Activated CD4-positive, alpha-beta T cell treated with anti-CD3 and anti-CD28 coated beads, Interleukin-2, amount 10 ng/mL, durations not matched to agents 24 days and 14 days (primary cell): ENCODE measurements at regions of chr11 and their contacts with region 1.

Region 1: DNA sequence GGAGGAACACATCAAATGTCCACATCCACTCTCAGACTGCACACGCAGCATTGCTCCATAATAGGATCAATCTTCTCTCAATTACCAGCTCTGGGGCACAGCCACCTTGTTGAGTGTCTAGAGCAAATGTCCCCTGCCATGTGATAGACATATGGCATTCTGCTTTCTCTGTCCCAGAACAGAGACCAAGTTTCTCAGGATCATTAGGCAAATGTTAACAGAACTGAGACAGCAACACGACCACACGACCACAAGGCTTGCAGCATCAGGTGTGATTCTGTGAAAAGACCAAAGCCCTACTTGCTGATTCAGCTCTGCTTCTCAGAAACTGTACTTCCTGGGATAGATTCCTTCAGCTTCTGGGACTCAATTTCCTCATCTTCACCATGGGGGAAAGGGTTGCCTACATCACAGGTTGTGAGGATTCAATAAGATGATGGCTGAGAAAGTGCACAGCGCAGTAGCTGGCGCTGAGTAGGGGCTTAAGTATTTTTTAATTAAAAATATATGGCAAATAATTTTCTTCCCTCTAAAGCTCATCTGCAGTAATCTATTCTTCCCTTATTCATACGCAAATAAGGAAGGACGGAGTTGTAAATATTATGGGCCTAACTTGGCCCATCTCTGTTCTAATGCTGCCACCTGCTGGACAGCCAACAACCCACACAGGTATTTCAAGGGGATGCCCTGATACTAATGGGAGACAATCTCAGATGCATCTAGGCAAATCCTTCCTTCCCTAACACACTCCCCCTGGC is 54.3 kb upstream of the USP47 start:
- DNase-seq: peak; percentile 89
- H3K4me3 Mint-ChIP-seq: no peak overlapping the region
- H3K27ac Mint-ChIP-seq: no peak overlapping the region
- H3K4me1 Mint-ChIP-seq: peaks cover 2% of the 10 kb centered on the region
- H3K27me3 Mint-ChIP-seq: peaks cover 12% of the 10 kb centered on the region

Region 2: GRCh38 chr11:10770626-10771254 is 1016.7 kb before region 1 on chr11:
- intact Hi-C with region 1: loop called (anchors 5 kb)
- DNase-seq: peak; percentile 73
- H3K4me3 Mint-ChIP-seq: no peak overlapping the region
- H3K27ac Mint-ChIP-seq: no peak overlapping the region
- H3K4me1 Mint-ChIP-seq: no peaks in the 10 kb centered on the region
- H3K27me3 Mint-ChIP-seq: no peaks in the 10 kb centered on the region

Region 3: GRCh38 chr11:10933455-10934292 is 853.8 kb before region 1 on chr11:
- intact Hi-C with region 1: loop called (anchors 2 kb)
- DNase-seq: peak; percentile 93
- H3K4me3 Mint-ChIP-seq: peak overlapping the region; percentile 81
- H3K27ac Mint-ChIP-seq: no peak overlapping the region
- H3K4me1 Mint-ChIP-seq: peaks cover 21% of the 10 kb centered on the region
- H3K27me3 Mint-ChIP-seq: peaks cover 54% of the 10 kb centered on the region

Region 4: DNA sequence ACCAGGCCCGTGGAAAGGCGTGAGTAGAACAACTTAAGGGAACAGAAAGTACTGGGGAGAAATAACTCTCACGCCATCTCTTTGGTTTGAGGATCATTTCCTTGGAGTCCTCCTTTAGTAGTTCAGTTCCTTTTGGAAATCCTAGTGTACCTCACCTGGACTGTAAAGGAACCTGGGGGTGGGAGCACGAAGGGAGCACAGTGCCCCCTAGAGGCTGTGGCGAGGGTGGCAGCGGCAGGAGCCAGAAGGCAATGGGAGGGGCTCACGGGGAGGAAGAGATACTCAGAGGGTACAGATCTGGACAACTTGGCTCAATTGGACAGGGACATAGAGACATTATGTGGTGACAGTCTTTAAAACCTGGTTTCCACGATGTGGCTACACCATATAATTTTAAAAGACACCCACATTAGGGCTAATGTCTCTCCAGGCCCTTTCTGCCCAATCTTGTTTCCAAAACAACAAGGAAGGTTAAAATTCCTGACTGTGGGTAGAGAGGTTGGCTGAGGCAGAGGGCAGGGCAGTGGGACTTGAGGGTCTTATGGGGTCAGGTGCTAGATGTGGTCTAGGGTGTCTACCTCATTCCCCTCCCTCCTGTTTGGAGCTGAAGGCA is 521.4 kb before region 1 on chr11:
- intact Hi-C with region 1: loop called (anchors 5 kb)
- DNase-seq: peak; percentile 89
- H3K4me3 Mint-ChIP-seq: no peak overlapping the region
- H3K27ac Mint-ChIP-seq: no peak overlapping the region
- H3K4me1 Mint-ChIP-seq: no peaks in the 10 kb centered on the region
- H3K27me3 Mint-ChIP-seq: peaks cover 4% of the 10 kb centered on the region

Region 5: DNA sequence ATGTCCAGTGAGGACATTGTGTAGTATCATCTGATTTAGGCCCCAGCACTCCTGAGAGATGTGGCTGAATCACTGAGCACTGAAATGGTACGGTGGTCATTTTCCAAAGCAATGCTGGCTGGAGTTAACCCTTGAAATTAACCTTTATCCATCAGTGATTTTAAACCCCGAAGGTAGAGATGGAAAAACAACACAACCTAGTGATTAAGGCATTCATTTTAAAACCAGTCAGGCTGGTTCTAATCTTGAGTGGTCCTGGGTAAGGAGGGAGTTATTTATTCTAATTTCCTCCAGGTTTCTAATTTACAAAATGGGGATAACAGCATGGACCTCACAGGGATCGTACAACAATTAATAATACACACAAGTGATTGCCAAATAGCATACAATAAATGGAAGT is 427.9 kb before region 1 on chr11:
- intact Hi-C with region 1: no loop called
- DNase-seq: no peak
- H3K4me3 Mint-ChIP-seq: no peak overlapping the region
- H3K27ac Mint-ChIP-seq: no peak overlapping the region
- H3K4me1 Mint-ChIP-seq: no peaks in the 10 kb centered on the region
- H3K27me3 Mint-ChIP-seq: peaks cover 5% of the 10 kb centered on the region

Region 6: GRCh38 chr11:11966826-11967668 is 179.6 kb after region 1 on chr11:
- intact Hi-C with region 1: loop called (anchors 5 kb)
- DNase-seq: peak; percentile 92
- H3K4me3 Mint-ChIP-seq: no peak overlapping the region
- H3K27ac Mint-ChIP-seq: no peak overlapping the region
- H3K4me1 Mint-ChIP-seq: peaks cover 5% of the 10 kb centered on the region
- H3K27me3 Mint-ChIP-seq: peaks cover 6% of the 10 kb centered on the region